ENCODE measurements at regions of chr3 and their contacts with region 1.

Region 1: DNA sequence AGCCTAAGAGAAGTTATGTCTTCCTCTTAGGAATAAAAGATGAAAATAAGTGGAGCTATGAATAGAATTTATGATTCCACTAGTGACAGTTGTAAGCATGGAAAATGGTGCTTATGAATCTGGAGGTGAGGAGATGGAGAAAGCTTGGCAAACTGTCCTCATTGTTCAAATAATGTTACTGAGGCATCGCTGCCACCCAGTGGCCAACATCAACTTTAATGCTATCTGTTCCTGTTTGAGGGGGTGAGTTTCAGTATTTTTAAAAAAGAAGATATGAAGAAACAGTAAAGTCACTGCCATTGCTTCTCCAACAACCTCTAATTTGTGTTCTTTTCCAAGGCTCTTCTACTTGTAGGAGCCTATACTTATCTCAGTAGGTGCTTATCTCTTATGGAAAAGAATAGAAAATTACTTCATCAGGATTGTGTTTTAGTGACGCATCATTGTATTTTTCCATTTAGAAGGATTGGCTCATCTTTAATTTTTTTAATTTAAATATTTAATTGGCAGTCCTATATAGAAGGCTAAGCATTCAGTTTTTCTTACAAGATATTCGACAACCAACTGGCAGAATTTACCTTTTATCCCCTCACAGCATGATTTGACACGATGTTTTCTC is 260.4 kb upstream of the P2RY1 start:
- DNase-seq: peak; percentile 68 to 88 (median 79)
- ATAC-seq: peak; percentile 85 to 87
- H3K4me3 ChIP-seq: no peak overlapping the region
- H3K27ac ChIP-seq: no peak overlapping the region
- H3K4me1 ChIP-seq: no peaks in the 10 kb centered on the region
- H3K27me3 ChIP-seq: no peaks in the 10 kb centered on the region

Region 2: GRCh38 chr3:152471814-152472671 is 102.5 kb before region 1 on chr3:
- intact Hi-C with region 1: loop called in 2 of 4 experiments (anchors 10 kb)
- DNase-seq: peak; percentile 42 to 77 (median 43)
- ATAC-seq: peak; percentile 73 to 82
- H3K4me3 ChIP-seq: peak overlapping the region; percentile 44
- H3K27ac ChIP-seq: no peak overlapping the region
- H3K4me1 ChIP-seq: no peaks in the 10 kb centered on the region
- H3K27me3 ChIP-seq: no peaks in the 10 kb centered on the region

Region 3: DNA sequence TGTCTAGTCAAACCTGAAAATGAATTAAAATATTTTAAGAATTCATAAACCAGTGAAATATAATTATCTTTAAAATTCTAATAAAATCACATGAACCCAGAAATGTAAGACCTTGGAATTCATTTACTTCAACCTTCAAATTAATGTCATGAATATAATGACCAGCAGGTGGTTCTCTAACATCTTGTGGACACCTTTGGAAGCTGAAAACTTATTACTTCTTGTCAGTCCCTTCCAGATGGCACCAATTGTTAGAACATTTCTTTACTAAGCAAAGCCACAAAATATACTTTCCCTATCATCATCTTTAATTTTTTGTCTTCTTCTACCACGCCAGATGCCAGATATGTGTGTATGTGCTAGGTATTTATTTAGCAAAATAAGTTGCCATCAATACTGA is 65.9 kb before region 1 on chr3:
- intact Hi-C with region 1: loop called in 3 of 4 experiments (anchors 5 to 10 kb)
- DNase-seq: no peak
- ATAC-seq: no peak
- H3K4me3 ChIP-seq: no peak overlapping the region
- H3K27ac ChIP-seq: no peak overlapping the region
- H3K4me1 ChIP-seq: no peaks in the 10 kb centered on the region
- H3K27me3 ChIP-seq: no peaks in the 10 kb centered on the region

Region 4: GRCh38 chr3:152879130-152879789 is 304.7 kb after region 1 on chr3:
- intact Hi-C with region 1: no loop called
- DNase-seq: no peak
- ATAC-seq: no peak
- H3K4me3 ChIP-seq: no peak overlapping the region
- H3K27ac ChIP-seq: no peak overlapping the region
- H3K4me1 ChIP-seq: no peaks in the 10 kb centered on the region
- H3K27me3 ChIP-seq: no peaks in the 10 kb centered on the region

Region 5: GRCh38 chr3:153026026-153026425 is 451.5 kb after region 1 on chr3:
- intact Hi-C with region 1: no loop called
- DNase-seq: no peak
- ATAC-seq: no peak
- H3K4me3 ChIP-seq: no peak overlapping the region
- H3K27ac ChIP-seq: no peak overlapping the region
- H3K4me1 ChIP-seq: no peaks in the 10 kb centered on the region
- H3K27me3 ChIP-seq: no peaks in the 10 kb centered on the region

Measured in right cardiac atrium (tissue), 5 donors.